ENCODE measurements at regions of chr4 and their contacts with region 1.

Region 1: GRCh38 chr4:122827879-122828601 is 1.4 kb downstream of the FGF2 start:
- DNase-seq: peak; percentile 77
- ATAC-seq: peak; percentile 4; the same call in 1 of the 2 replicates
- H3K4me3 ChIP-seq: peak overlapping the region; percentile 99
- H3K27ac ChIP-seq: peak overlapping the region; percentile 96
- H3K4me1 ChIP-seq: peaks cover 19% of the 10 kb centered on the region
- H3K27me3 ChIP-seq: no peaks in the 10 kb centered on the region
- CTCF ChIP-seq: peak; percentile 30; the same call in 1 of the 2 replicates
- POLR2A ChIP-seq: no peak
- RAD21 ChIP-seq: no peak; the same call in 1 of the 2 replicates

Region 2: DNA sequence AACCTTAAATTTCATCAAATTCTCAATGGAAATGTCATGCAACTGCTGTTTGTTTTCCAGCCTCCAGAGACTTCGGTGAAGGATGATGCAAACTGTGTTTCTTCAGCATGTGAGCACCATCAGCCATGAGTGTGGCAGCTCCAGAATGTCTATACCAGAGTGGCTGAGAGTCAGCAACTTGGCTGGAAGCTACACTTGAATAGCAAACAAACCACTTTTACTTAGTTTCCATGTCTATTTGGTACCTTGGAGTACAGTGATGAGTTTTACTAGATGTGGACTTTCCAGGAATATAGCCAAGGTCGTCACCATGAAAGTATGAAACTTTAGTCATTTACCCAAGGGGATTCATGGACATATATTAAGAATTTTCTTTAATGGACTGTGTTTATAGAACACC is 202.9 kb before region 1 on chr4:
- CTCF ChIA-PET with region 1: no interaction called
- POLR2A ChIA-PET with region 1: no interaction called
- dilution Hi-C with region 1: no loop called
- in situ Hi-C with region 1: no loop called
- intact Hi-C with region 1: no loop called
- DNase-seq: peak; percentile 30
- ATAC-seq: no peak
- H3K4me3 ChIP-seq: no peak overlapping the region
- H3K27ac ChIP-seq: no peak overlapping the region
- H3K4me1 ChIP-seq: no peaks in the 10 kb centered on the region
- H3K27me3 ChIP-seq: peaks cover 8% of the 10 kb centered on the region
- CTCF ChIP-seq: no peak
- POLR2A ChIP-seq: no peak
- RAD21 ChIP-seq: no peak

Region 3: GRCh38 chr4:122758033-122758432 is 70.0 kb before region 1 on chr4:
- CTCF ChIA-PET with region 1: interaction called, 4 read pairs
- POLR2A ChIA-PET with region 1: no interaction called
- dilution Hi-C with region 1: no loop called
- in situ Hi-C with region 1: no loop called
- intact Hi-C with region 1: loop called (anchors 1 kb)
- DNase-seq: peak; percentile 51
- ATAC-seq: peak; percentile 68
- H3K4me3 ChIP-seq: no peak overlapping the region
- H3K27ac ChIP-seq: no peak overlapping the region
- H3K4me1 ChIP-seq: no peaks in the 10 kb centered on the region
- H3K27me3 ChIP-seq: no peaks in the 10 kb centered on the region
- CTCF ChIP-seq: peak; percentile 77
- POLR2A ChIP-seq: no peak
- RAD21 ChIP-seq: peak; percentile 72

Region 4: GRCh38 chr4:122845760-122846159 is 17.7 kb after region 1 on chr4:
- CTCF ChIA-PET with region 1: no interaction called
- POLR2A ChIA-PET with region 1: no interaction called
- dilution Hi-C with region 1: no loop called
- in situ Hi-C with region 1: no loop called
- intact Hi-C with region 1: loop called (anchors 2 kb)
- DNase-seq: no peak
- ATAC-seq: no peak
- H3K4me3 ChIP-seq: no peak overlapping the region
- H3K27ac ChIP-seq: no peak overlapping the region
- H3K4me1 ChIP-seq: peaks cover 7% of the 10 kb centered on the region; the same call in 1 of the 2 replicates
- H3K27me3 ChIP-seq: no peaks in the 10 kb centered on the region
- CTCF ChIP-seq: no peak
- POLR2A ChIP-seq: no peak
- RAD21 ChIP-seq: no peak

Region 5: GRCh38 chr4:122873821-122874593 is 46.0 kb after region 1 on chr4:
- CTCF ChIA-PET with region 1: no interaction called
- POLR2A ChIA-PET with region 1: no interaction called
- dilution Hi-C with region 1: no loop called
- in situ Hi-C with region 1: no loop called
- intact Hi-C with region 1: loop called (anchors 5 kb)
- DNase-seq: peak; percentile 90
- ATAC-seq: peak; percentile 76
- H3K4me3 ChIP-seq: no peak overlapping the region
- H3K27ac ChIP-seq: peak overlapping the region; percentile 62; the same call in 1 of the 2 replicates
- H3K4me1 ChIP-seq: peaks cover 10% of the 10 kb centered on the region
- H3K27me3 ChIP-seq: no peaks in the 10 kb centered on the region
- CTCF ChIP-seq: no peak
- POLR2A ChIP-seq: no peak
- RAD21 ChIP-seq: no peak

Measured in IMR-90 (cell line).